ENCODE measurements at regions of chr11 and their contacts with region 1.

Region 1: GRCh38 chr11:34105079-34105956 is at the start of gene NAT10:
- DNase-seq: peak; percentile 95 to 97
- H3K4me3 ChIP-seq: peak within 1 kb of the TSS; percentile 71 to 95 (median 91)
- H3K27ac ChIP-seq: peak within 1 kb of the TSS; percentile 95
- H3K4me1 ChIP-seq: peaks cover 0 to 2% (median 0%) of the 10 kb centered on the region in 4 experiments; a peak in 1 of 7 replicates
- H3K27me3 ChIP-seq: no peaks in the 10 kb centered on the region
- CTCF ChIP-seq: 0 out of 4 replicates have a peak, but pooled peaks of 1 of the 3 experiments have one; percentile 4
- EP300 ChIP-seq: no peak
- POLR2A ChIP-seq: peak; percentile 99 to 100
- RAD21 ChIP-seq: no peak
- total RNA-seq, gene NAT10: 88.7 and 89.6 TPM in 2 replicates

Region 2: GRCh38 chr11:34051349-34052035 is 53.8 kb before region 1 on chr11 and contains the start of gene CAPRIN1:
- CTCF ChIA-PET with region 1: no interaction called
- POLR2A ChIA-PET with region 1: interaction called, 81 read pairs
- DNase-seq: peak; percentile 84 to 86
- H3K4me3 ChIP-seq: peak within 1 kb of the TSS; percentile 86 to 96 (median 94)
- H3K27ac ChIP-seq: peak within 1 kb of the TSS; percentile 97
- H3K4me1 ChIP-seq: peaks cover 0 to 3% (median 3%) of the 10 kb centered on the region in 4 experiments; a peak in 4 of 7 replicates
- H3K27me3 ChIP-seq: no peaks in the 10 kb centered on the region
- CTCF ChIP-seq: no peak
- EP300 ChIP-seq: 0 out of 3 replicates have a peak, but pooled peaks of 1 of the 2 experiments have one; percentile 15
- POLR2A ChIP-seq: peak; percentile 71 to 81
- RAD21 ChIP-seq: no peak
- total RNA-seq, gene CAPRIN1: 295 and 317 TPM in 2 replicates

Region 3: GRCh38 chr11:34068111-34068510 is 37.2 kb before region 1 on chr11:
- CTCF ChIA-PET with region 1: interaction called, 10 read pairs
- POLR2A ChIA-PET with region 1: interaction called, 7 read pairs
- DNase-seq: no peak
- H3K4me3 ChIP-seq: no peak overlapping the region
- H3K27ac ChIP-seq: no peak overlapping the region
- H3K4me1 ChIP-seq: no peaks in the 10 kb centered on the region
- H3K27me3 ChIP-seq: no peaks in the 10 kb centered on the region
- CTCF ChIP-seq: no peak
- EP300 ChIP-seq: no peak
- POLR2A ChIP-seq: no peak
- RAD21 ChIP-seq: no peak

Region 4: DNA sequence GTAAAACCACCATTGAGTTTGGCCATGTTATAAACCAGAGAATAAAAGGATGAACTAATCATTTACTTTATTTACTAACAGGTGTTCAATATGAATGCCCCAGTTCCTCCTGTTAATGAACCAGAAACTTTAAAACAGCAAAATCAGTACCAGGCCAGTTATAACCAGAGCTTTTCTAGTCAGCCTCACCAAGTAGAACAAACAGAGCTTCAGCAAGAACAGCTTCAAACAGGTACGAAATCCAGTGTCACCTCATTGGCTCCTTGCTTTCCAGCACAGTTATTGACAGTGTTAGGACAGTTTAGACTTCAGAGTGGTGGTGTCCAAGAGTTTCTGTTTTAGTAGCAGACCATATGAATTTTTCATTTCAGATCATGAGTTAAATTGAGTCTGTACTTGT is 13.5 kb before region 1 on chr11:
- CTCF ChIA-PET with region 1: interaction called, 3 read pairs
- POLR2A ChIA-PET with region 1: interaction called, 20 read pairs
- DNase-seq: no peak
- H3K4me3 ChIP-seq: no peak overlapping the region
- H3K27ac ChIP-seq: no peak overlapping the region
- H3K4me1 ChIP-seq: no peaks in the 10 kb centered on the region
- H3K27me3 ChIP-seq: no peaks in the 10 kb centered on the region
- CTCF ChIP-seq: no peak
- EP300 ChIP-seq: no peak
- POLR2A ChIP-seq: no peak
- RAD21 ChIP-seq: no peak

Region 5: GRCh38 chr11:34124885-34125668 is 19.8 kb after region 1 on chr11:
- CTCF ChIA-PET with region 1: no interaction called
- POLR2A ChIA-PET with region 1: interaction called, 14 read pairs
- DNase-seq: no peak
- H3K4me3 ChIP-seq: no peak overlapping the region
- H3K27ac ChIP-seq: no peak overlapping the region
- H3K4me1 ChIP-seq: no peaks in the 10 kb centered on the region
- H3K27me3 ChIP-seq: no peaks in the 10 kb centered on the region
- CTCF ChIP-seq: no peak
- EP300 ChIP-seq: no peak
- POLR2A ChIP-seq: no peak
- RAD21 ChIP-seq: no peak

Region 6: GRCh38 chr11:34132261-34132965 is 27.1 kb after region 1 on chr11:
- CTCF ChIA-PET with region 1: no interaction called
- POLR2A ChIA-PET with region 1: interaction called, 12 read pairs
- DNase-seq: no peak
- H3K4me3 ChIP-seq: no peak overlapping the region
- H3K27ac ChIP-seq: no peak overlapping the region
- H3K4me1 ChIP-seq: no peaks in the 10 kb centered on the region
- H3K27me3 ChIP-seq: no peaks in the 10 kb centered on the region
- CTCF ChIP-seq: no peak
- EP300 ChIP-seq: no peak
- POLR2A ChIP-seq: no peak
- RAD21 ChIP-seq: no peak

Region 7: GRCh38 chr11:34151916-34152845 is 46.9 kb after region 1 on chr11:
- CTCF ChIA-PET with region 1: no interaction called
- POLR2A ChIA-PET with region 1: no interaction called
- DNase-seq: no peak
- H3K4me3 ChIP-seq: no peak overlapping the region
- H3K27ac ChIP-seq: no peak overlapping the region
- H3K4me1 ChIP-seq: no peaks in the 10 kb centered on the region
- H3K27me3 ChIP-seq: no peaks in the 10 kb centered on the region
- CTCF ChIP-seq: no peak
- EP300 ChIP-seq: no peak
- POLR2A ChIP-seq: no peak
- RAD21 ChIP-seq: no peak

Region 8: GRCh38 chr11:34417202-34417601 is 311.9 kb after region 1 on chr11:
- CTCF ChIA-PET with region 1: no interaction called
- POLR2A ChIA-PET with region 1: no interaction called
- DNase-seq: no peak
- H3K4me3 ChIP-seq: no peak overlapping the region
- H3K27ac ChIP-seq: no peak overlapping the region
- H3K4me1 ChIP-seq: no peaks in the 10 kb centered on the region
- H3K27me3 ChIP-seq: no peaks in the 10 kb centered on the region
- CTCF ChIP-seq: peak in 2 of 3 experiments; percentile 12 to 18; a peak in 2 of 4 replicates
- EP300 ChIP-seq: no peak
- POLR2A ChIP-seq: no peak
- RAD21 ChIP-seq: no peak